Vagina (tissue), 2 donors: ENCODE measurements at regions of chr19 and their contacts with region 1.

Region 1: DNA sequence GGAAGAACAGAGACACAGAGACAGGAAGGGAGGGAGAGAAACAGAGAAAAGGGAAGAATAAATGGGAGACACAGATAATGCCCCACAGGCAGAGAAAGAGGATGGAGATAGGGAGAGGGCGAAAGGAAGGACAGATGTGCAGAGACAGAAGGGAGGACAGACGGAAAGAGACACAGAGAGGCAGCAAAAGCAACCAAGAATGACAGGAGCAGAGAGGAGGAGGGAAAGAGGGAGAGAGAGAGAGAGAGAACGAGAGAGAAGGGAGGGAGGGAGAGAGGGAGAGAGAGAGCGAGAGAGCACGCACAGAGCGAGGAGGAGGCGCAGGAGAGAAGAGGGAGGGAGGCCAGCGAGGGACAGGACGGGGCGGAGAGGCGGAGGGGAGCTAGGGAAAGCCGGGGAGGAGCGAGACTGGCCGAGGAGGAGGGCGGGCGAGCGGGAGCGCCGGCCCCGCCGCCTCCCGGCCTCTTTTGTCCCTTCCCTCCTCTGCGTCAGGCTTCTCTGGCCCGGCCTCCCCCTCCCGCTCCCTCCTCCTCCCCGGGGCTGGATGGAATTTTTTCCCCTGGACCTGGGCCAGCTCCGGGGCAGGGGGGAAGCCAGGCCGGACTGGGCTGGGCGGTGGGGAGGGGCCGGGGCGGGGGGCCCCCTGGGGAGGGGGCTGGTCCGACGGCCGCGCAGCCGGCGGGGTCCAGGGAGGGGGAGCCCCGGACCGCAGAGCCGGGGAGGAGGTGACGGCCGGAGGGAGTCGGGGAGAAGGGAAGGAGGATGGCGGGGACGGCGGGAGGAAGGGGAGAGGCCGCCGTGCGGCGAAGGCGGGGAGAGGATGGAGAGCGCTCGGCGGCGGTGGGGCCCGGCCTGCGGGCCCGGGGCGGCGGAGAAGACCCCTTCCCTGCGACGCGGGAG is 4.2 kb upstream of the SPACA6 start:
- DNase-seq: peak in 1 of 2 donors; percentile 97
- H3K4me3 ChIP-seq: peak overlapping the region; percentile 64 to 96
- H3K27ac ChIP-seq: peak overlapping the region; percentile 97
- H3K4me1 ChIP-seq: peaks cover 40% of the 10 kb centered on the region
- H3K27me3 ChIP-seq: no peaks in the 10 kb centered on the region
- CTCF ChIP-seq: peak in 1 of 3 experiments; percentile 28
- POLR2A ChIP-seq: peak in 1 of 2 donors; percentile 60

Region 2: DNA sequence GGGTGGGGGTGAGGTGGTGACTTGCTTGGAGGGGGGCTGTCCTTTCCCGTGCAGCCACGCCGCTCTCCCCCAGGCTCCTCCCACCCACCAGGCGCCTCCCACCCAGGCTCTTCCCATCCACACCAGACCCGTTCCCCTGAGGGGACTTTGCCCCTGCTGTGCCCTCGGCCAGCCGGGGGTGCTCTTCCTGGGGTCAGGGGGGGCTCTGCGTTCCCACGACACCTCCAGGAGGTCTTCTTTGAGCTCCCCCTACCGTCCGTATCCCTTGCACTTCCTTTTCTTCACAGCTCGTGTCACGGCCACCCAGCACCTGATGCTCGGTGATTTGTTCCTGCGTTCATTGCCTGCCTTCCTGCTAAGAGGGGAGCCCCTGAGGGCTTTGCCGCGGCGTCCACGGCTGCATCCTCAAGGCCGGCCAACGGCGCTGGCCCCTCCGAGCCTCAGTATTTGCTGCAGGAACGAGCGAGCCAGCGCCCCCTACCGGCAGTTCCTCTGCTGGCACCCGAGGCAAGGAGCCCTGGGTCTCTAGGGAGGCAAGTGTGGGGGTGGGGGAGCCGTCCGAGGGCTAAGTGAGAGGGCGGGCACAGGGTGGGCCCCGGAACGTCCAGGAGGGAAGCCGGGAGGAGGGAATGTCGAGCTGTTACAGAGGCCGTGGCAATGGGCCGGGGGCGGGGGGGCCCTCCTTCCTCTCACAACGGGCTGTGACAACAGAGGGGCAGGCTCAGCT is 1132.5 kb before region 1 on chr19:
- intact Hi-C with region 1: no loop called
- DNase-seq: no peak
- H3K4me3 ChIP-seq: peak overlapping the region; percentile 41 to 44
- H3K27ac ChIP-seq: peak overlapping the region; percentile 68
- H3K4me1 ChIP-seq: peaks cover 35% of the 10 kb centered on the region
- H3K27me3 ChIP-seq: no peaks in the 10 kb centered on the region
- CTCF ChIP-seq: peak; percentile 58 to 71 (median 66)
- POLR2A ChIP-seq: no peak

Region 3: DNA sequence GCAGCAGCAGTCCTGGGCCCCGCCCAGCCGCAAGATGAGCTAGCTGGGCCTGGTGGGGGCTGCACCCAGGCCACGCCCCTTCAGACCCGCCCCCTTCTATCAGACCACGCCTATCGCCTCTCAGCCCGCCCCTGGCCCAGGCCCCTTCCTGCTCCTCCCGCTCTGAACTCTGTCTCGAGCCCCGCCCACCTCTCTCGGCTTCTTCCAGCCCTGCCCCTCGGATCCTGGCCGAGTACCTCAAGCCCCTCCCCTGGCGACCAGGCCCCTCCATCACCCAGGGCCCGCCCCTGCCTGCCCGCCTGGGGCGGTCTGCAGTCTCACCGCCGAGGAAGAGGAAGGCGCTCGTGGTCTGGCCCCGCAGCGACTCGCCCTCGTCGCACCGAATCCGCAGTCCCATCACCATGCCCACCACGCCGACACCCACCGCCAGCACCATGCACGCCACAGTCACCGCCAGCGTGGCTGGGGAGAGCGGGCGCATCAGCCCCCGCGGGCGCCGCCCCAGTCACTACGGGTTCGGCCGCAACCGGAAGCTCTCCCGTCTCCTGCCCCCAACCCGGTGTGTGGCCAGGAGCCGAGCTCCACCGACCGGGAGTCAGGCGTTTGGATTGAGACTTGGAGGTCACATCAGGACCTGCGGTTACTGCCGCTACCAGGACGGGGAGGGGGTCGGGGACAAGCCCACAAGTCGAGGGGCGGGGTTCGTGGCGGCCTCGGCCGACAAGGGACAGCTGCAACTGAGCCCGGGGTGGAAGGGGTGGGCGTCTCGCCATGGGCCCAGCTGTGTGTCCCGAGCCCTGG is 321.2 kb before region 1 on chr19:
- intact Hi-C with region 1: loop called (anchors 10 kb)
- DNase-seq: peak; percentile 99 to 100
- H3K4me3 ChIP-seq: peak overlapping the region; percentile 79 to 81
- H3K27ac ChIP-seq: peak overlapping the region; percentile 93
- H3K4me1 ChIP-seq: peaks cover 36% of the 10 kb centered on the region
- H3K27me3 ChIP-seq: no peaks in the 10 kb centered on the region
- CTCF ChIP-seq: no peak
- POLR2A ChIP-seq: peak; percentile 5 to 42

Region 4: DNA sequence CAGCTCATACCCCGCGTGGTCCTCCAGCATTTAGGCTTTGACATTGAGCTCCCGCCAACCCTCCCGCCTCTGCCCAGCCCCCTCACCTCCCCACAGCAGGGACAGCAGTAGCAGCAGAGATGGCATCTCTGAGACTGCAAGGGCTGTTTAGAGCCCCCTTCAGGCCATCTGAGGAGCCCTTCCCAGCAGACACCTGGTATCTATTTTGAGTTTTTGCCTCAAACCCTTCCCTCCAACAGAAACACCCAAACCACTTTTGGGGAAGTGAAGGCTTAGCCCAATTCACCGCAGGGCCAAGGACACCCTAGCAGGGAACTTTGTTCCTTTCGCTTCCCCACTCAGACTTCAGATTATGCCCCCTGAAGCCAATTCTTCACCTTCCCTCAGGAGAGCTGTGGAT is 124.1 kb before region 1 on chr19:
- intact Hi-C with region 1: loop called (anchors 10 kb)
- DNase-seq: no peak
- H3K4me3 ChIP-seq: no peak overlapping the region
- H3K27ac ChIP-seq: no peak overlapping the region
- H3K4me1 ChIP-seq: no peaks in the 10 kb centered on the region
- H3K27me3 ChIP-seq: no peaks in the 10 kb centered on the region
- CTCF ChIP-seq: no peak
- POLR2A ChIP-seq: no peak

Region 5: DNA sequence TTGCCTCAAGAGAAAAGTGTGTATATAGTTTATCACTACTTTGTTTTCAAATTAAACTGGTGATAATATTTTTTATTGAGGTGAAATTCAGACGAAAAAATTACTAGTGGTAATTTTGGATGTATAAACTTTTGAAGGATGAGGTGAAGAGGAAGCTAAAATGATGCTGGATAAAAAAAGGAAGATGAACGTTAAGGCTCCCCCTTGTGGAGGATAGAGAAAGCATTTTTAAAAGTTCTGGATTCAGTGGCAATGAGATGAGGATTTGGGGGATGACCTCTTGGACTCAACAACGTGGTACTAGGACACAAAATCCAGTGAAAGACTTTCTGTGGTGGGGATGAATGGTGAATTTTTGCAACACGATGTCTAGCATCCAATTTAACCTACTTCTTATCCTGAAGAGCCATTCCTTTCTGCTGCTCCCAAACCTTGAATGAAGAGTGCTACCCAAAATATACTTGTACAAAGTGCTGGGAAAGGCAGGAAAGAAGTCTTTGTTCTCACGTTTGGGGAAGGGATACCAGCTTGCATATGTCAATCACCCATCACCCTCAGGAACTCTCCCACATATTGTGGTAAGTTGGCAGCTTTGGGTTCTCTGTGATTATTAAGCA is 51.5 kb before region 1 on chr19:
- intact Hi-C with region 1: no loop called
- DNase-seq: no peak
- H3K4me3 ChIP-seq: no peak overlapping the region
- H3K27ac ChIP-seq: no peak overlapping the region
- H3K4me1 ChIP-seq: no peaks in the 10 kb centered on the region
- H3K27me3 ChIP-seq: no peaks in the 10 kb centered on the region
- CTCF ChIP-seq: no peak
- POLR2A ChIP-seq: no peak

Region 6: GRCh38 chr19:51651216-51651846 is 37.6 kb before region 1 on chr19:
- intact Hi-C with region 1: no loop called
- DNase-seq: no peak
- H3K4me3 ChIP-seq: no peak overlapping the region
- H3K27ac ChIP-seq: no peak overlapping the region
- H3K4me1 ChIP-seq: no peaks in the 10 kb centered on the region
- H3K27me3 ChIP-seq: no peaks in the 10 kb centered on the region
- CTCF ChIP-seq: no peak
- POLR2A ChIP-seq: no peak

Region 7: DNA sequence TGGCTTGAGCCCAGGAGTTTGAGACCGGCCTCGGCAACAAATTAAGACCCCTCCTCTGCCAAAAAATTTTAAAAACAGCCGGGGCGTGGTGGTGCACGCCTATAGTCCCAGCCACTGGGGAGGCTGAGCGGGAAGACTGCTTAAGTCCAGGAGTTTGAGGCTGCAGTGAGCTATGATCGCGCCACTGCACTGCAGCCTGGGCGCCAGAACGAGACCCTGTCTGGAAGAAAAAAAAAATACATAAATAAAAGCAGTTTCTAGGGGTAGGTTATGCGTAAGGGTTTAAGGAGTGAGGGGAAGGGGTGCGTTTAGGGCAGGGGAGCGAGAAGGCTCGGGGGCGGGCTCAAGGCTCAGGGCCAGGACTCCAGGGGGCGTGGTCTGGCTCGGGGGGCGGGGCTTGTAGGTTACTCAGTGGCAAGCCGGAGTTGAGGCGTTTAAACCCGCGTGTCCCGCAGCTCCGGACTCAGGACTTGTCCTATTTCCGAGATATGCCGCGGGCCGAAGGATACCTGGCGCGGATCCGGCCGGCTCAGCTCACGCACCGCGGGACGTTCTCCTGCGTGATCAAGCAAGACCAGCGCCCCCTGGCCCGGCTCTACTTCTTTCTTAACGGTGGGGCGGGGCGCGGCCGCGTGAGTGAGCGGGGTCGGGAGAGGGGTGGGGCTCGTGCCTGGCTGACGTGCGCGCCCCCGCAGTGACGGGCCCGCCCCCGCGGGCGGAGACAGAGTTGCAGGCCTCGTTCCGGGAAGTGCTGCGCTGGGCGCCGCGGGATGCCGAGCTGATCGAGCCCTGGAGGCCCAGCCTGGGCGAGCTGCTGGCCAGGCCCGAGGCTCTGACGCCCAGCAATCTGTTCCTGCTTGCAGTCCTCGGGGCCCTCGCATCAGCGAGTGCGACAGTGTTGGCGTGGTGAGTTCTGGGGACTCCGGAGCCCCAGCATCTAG is 14.9 kb after region 1 on chr19:
- intact Hi-C with region 1: loop called (anchors 2 kb)
- DNase-seq: peak in 1 of 2 donors; percentile 99
- H3K4me3 ChIP-seq: peak overlapping the region; percentile 70 to 80
- H3K27ac ChIP-seq: peak overlapping the region; percentile 94
- H3K4me1 ChIP-seq: peaks cover 47% of the 10 kb centered on the region
- H3K27me3 ChIP-seq: no peaks in the 10 kb centered on the region
- CTCF ChIP-seq: peak; percentile 10 to 31 (median 16)
- POLR2A ChIP-seq: peak in 1 of 2 donors; percentile 69